ENCODE measurements at regions of chr7 and their contacts with region 1.

Region 1: GRCh38 chr7:139680676-139681462 is 96.9 kb downstream of the HIPK2 start:
- DNase-seq: peak; percentile 65 to 75
- ATAC-seq: peak; percentile 78 to 92 (median 91)
- H3K4me3 ChIP-seq: no peak overlapping the region
- H3K27ac ChIP-seq: peak overlapping the region; percentile 78 to 93 (median 85)
- H3K4me1 ChIP-seq: peaks cover 25 to 66% (median 59%) of the 10 kb centered on the region in 9 donors
- H3K27me3 ChIP-seq: no peaks in the 10 kb centered on the region
- CTCF ChIP-seq: no peak

Region 2: GRCh38 chr7:139725077-139725476 is 44.2 kb after region 1 on chr7:
- intact Hi-C with region 1: loop called in 2 of 10 experiments (anchors 2 to 5 kb)
- DNase-seq: no peak
- ATAC-seq: no peak
- H3K4me3 ChIP-seq: no peak overlapping the region
- H3K27ac ChIP-seq: peak overlapping the region in 6 of 10 donors; percentile 1 to 90 (median 44)
- H3K4me1 ChIP-seq: peaks cover 27 to 89% (median 84%) of the 10 kb centered on the region in 9 donors
- H3K27me3 ChIP-seq: no peaks in the 10 kb centered on the region
- CTCF ChIP-seq: no peak

Region 3: GRCh38 chr7:139731802-139732470 is 51.1 kb after region 1 on chr7:
- intact Hi-C with region 1: loop called in 2 of 10 experiments (anchors 2 to 5 kb)
- DNase-seq: peak; percentile 76 to 85
- ATAC-seq: peak; percentile 36 to 82 (median 76)
- H3K4me3 ChIP-seq: no peak overlapping the region
- H3K27ac ChIP-seq: peak overlapping the region; percentile 81 to 92 (median 90)
- H3K4me1 ChIP-seq: peaks cover 35 to 91% (median 86%) of the 10 kb centered on the region in 9 donors
- H3K27me3 ChIP-seq: no peaks in the 10 kb centered on the region
- CTCF ChIP-seq: no peak